ENCODE measurements at regions of chr19 and their contacts with region 1.

Region 1: DNA sequence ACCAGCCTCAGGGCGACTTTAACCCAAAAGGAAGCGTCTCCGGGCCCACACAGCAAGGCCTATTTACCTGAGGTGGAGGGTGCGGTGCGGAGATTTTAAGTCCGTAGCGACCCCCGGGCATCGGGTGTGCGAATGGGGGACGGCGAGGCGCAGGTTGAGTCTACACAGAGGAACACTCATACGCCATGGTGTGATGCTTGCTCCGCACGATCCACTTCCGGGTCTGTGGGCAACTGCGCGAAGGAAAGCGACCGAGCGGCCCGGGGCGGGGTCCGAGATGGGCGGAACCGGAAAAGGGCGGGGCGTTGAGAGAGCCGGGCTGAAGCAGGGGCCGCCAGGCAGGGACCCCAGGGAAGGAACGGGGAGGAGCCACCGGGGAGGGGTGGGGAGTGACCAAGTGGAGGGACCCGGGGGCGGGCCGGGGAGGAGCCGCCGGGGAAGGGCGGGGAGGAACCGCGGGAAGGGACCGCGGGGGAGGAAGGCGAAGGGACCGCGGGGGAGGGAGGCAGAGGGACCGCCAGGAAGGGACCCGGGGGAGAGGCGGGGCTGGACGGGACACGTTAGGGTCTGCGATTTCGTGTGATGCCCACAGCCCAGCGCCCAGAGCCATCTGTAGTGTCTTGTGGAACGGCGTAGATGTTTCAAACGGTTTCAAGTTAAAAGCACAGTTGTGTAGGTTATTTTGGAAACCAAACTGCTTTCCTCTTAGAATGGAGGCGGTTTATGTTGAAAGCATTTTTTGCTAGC is at the start of gene ZNF160:
- DNase-seq: peak; percentile 100
- ATAC-seq: peak; percentile 97
- H3K4me3 Mint-ChIP-seq: peak within 1 kb of the TSS; percentile 87
- H3K27ac Mint-ChIP-seq: peak within 1 kb of the TSS; percentile 93
- H3K4me1 Mint-ChIP-seq: peaks cover 32% of the 10 kb centered on the region
- H3K27me3 Mint-ChIP-seq: no peaks in the 10 kb centered on the region
- CTCF ChIP-seq: no peak
- total RNA-seq, gene ZNF160: 46.3 and 61.3 TPM in 2 replicates

Region 2: GRCh38 chr19:52535771-52536447 is 567.5 kb before region 1 on chr19:
- CTCF ChIA-PET with region 1: no interaction called
- POLR2A ChIA-PET with region 1: no interaction called
- intact Hi-C with region 1: loop called (anchors 5 kb)
- DNase-seq: peak; percentile 86
- ATAC-seq: peak; percentile 98
- H3K4me3 Mint-ChIP-seq: peak overlapping the region; percentile 92
- H3K27ac Mint-ChIP-seq: peak overlapping the region; percentile 86
- H3K4me1 Mint-ChIP-seq: peaks cover 23% of the 10 kb centered on the region
- H3K27me3 Mint-ChIP-seq: no peaks in the 10 kb centered on the region
- CTCF ChIP-seq: no peak

Region 3: DNA sequence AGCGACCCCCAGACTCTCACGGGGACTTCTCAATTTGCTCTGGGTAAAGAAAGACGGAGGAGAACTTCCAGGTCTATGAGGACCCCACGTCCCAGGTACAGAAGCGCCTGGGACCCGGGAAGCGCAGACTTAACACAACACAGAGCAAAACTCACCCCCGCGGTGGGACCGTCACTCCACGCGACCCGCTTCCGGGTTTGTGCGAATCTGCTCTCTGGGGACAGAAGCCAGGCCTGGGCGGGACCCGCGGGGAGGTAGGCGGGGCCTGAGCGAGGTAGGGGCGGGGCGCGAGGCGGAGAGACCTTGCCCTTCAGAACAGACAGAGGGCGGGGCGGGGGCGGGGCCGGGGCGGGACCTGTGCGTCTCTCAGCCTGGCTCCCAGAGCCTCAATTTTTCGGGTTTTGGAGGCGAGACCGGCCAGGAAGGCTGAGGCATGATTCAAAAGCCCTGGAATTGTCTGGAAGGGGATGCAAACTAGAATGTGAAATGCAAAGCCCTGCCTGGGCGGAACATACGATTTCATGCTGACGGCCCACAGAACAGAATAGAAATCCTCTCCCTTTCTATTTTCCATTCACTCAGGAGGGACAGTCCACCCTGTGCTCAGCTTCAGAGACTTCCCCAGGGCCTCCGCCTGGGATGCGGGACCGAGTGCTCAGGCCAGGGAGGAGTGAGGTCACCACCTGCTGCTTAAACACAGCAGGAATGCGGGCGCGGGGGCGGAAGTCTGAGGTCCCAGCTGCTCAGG is 160.8 kb before region 1 on chr19:
- CTCF ChIA-PET with region 1: no interaction called
- POLR2A ChIA-PET with region 1: no interaction called
- intact Hi-C with region 1: loop called (anchors 5 kb)
- DNase-seq: peak; percentile 98
- ATAC-seq: peak; percentile 99
- H3K4me3 Mint-ChIP-seq: peak overlapping the region; percentile 96
- H3K27ac Mint-ChIP-seq: peak overlapping the region; percentile 92
- H3K4me1 Mint-ChIP-seq: peaks cover 31% of the 10 kb centered on the region
- H3K27me3 Mint-ChIP-seq: no peaks in the 10 kb centered on the region
- CTCF ChIP-seq: no peak

Region 4: DNA sequence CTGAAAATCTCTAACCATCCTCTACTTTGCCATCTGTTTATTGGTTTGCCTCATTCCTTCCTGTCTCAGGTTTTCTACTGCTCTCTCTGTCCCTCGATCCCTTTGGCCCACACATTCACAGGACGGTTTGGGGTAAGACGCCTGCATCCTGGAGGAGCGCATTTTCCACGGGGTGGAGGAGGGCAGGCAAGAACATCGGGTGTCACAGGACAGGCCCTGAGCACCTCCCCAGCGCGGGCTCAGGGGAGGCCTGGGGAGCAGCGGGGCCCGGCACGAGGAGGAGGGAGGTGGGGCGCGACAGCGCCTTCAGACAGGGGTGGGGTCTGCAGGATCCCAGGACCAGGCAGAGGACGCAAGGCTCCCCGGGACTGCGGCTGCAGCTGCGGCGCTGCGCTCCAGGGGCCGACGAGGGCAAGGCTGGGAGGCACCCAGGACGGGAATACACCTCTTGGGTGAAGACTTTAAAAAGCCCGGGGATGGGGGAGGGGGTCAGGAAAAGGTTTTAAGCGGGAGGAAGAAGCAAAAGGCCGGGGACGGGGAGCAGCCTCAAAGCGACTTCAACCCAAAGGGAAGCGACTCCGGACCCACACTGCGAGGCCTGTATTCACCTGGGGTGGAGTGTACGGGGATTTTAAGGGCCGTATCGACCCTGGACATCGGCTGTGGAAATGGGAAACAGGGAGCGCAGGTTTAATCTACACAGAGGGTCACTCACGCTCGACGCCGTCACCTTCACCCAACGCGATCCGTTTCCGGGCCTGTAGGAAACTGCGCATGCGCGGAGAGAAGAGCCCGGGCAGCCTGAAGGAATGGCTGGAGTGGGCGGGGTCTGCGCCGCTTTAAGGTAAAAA is 29.0 kb after region 1 on chr19 and contains the start of gene ZNF415:
- CTCF ChIA-PET with region 1: no interaction called
- POLR2A ChIA-PET with region 1: no interaction called
- intact Hi-C with region 1: loop called (anchors 1 kb)
- DNase-seq: peak; percentile 62
- ATAC-seq: peak; percentile 93
- H3K4me3 Mint-ChIP-seq: peak within 1 kb of the TSS; percentile 85
- H3K27ac Mint-ChIP-seq: peak within 1 kb of the TSS; percentile 70
- H3K4me1 Mint-ChIP-seq: peaks cover 16% of the 10 kb centered on the region
- H3K27me3 Mint-ChIP-seq: no peaks in the 10 kb centered on the region
- CTCF ChIP-seq: no peak
- total RNA-seq, gene ZNF415: 2.7 and 5.8 TPM in 2 replicates

Region 5: DNA sequence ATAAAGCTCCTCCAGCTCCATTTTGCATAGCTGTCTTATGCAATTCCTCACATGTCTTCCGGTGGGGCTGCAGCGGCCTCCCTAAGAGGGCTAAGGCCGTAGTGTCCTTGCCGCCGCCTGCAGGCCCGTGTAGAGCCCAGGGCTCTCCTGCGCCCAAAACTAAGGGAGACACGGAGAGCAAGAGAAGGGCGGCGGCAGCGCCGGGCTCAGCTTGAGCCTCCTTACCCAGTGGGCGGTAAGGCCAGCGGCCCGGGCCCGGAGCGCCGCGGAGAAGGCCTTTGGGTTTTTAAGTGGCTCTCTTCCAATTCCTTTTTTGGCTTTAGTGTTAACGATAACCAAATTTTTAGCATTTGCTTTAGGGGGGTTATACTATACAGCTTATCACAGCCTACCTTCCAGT is 121.2 kb after region 1 on chr19:
- CTCF ChIA-PET with region 1: no interaction called
- POLR2A ChIA-PET with region 1: no interaction called
- intact Hi-C with region 1: no loop called
- DNase-seq: no peak
- ATAC-seq: no peak
- H3K4me3 Mint-ChIP-seq: no peak overlapping the region
- H3K27ac Mint-ChIP-seq: no peak overlapping the region
- H3K4me1 Mint-ChIP-seq: no peaks in the 10 kb centered on the region
- H3K27me3 Mint-ChIP-seq: no peaks in the 10 kb centered on the region
- CTCF ChIP-seq: no peak

Region 6: DNA sequence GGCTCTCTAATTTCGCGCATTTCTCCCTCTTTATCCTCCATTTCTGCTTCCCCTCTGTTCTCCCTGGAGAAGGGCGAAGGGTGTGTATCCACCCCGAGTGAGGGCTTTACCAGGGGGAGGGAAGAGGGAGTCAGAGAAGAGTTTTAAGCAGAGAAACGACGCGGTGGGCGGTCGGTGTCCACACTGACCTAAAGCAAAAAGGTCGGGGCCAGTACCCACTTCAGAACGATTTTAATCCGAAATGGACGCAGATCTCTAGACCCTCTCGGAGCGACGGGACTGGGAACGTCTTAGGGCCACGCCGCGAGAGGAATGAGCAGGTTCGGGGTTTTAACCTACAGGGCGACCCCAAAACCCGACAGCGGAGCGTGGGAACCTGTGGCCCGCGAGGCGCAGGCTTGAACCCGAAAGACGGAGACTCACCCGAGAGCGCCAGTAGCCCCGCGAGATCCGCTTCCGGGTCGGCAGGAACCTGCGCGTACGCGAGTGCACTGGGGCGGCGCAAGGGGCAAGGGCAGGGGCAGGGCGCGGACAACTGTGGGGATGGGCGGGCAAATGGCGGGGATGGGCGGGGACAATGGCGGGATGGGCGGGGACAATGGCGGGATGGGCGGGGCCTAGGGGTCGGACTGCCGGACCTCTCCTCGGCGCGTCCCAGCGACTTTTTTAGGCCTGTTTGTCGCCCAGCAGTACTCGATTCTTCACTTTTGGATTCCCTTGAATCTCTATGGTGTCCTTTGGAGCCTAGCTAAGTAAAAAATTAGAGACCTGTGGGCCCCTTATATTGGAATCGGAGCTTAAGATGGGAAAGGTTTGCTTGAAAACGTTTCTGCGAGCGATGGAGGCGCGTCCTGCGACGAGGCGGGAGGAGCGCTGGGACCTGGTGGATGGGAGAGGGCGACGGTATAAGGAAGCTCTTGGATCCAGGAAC is 151.3 kb after region 1 on chr19 and contains the start of gene ZNF677:
- CTCF ChIA-PET with region 1: no interaction called
- POLR2A ChIA-PET with region 1: no interaction called
- intact Hi-C with region 1: loop called (anchors 10 kb)
- DNase-seq: peak; percentile 57
- ATAC-seq: peak; percentile 99
- H3K4me3 Mint-ChIP-seq: peak within 1 kb of the TSS; percentile 87
- H3K27ac Mint-ChIP-seq: peak within 1 kb of the TSS; percentile 77
- H3K4me1 Mint-ChIP-seq: peaks cover 12% of the 10 kb centered on the region
- H3K27me3 Mint-ChIP-seq: no peaks in the 10 kb centered on the region
- CTCF ChIP-seq: no peak
- total RNA-seq, gene ZNF677: 13.7 and 14.2 TPM in 2 replicates

Region 7: DNA sequence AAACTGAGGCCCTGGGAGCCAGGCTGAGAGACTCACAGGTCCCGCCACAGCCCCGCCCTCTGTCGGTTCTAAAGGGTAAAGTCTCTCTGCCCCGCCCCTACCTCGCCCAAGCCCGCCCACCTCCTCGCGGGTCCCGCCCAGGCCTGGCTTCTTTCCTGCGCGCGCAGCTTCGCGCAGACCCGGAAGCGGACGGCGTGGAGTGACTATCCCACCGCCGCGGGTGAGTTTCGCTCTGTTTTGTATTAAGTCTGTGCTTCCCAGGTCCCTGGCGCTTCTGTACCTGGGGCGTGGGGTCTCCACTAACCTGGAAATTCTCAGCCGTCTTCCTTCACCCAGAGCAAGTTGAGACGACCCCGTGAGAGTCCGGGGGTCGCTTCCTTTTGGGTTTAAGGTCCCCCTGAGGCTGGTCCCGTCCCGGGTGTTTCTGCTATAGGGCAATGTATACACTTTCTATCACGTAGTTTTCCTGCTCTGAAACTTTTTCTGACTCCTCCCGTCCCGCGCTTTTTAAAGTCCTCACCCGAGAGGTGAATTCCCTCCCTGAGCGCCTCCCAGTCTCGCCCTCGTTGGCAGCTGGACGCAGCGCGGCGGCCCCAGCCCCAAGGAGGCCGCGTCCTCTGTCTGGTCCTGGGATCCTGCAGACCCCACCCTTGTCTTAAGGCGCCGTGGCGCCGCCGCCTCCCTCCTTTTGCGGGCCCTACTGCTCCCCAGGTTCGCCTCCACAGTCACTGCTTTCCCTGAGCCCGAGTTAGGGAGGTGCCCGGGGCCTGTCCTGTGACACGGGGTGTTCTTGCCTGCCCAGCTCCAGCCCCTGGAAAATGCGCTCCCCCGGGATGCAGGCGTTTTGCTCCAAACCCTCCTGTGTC is 291.8 kb after region 1 on chr19 and contains the start of gene ZNF765:
- CTCF ChIA-PET with region 1: no interaction called
- POLR2A ChIA-PET with region 1: no interaction called
- intact Hi-C with region 1: loop called (anchors 1 kb)
- DNase-seq: peak; percentile 98
- ATAC-seq: peak; percentile 99
- H3K4me3 Mint-ChIP-seq: peak within 1 kb of the TSS; percentile 95
- H3K27ac Mint-ChIP-seq: peak within 1 kb of the TSS; percentile 90
- H3K4me1 Mint-ChIP-seq: peaks cover 29% of the 10 kb centered on the region
- H3K27me3 Mint-ChIP-seq: no peaks in the 10 kb centered on the region
- CTCF ChIP-seq: no peak
- total RNA-seq, gene ZNF765: 16.2 and 18.9 TPM in 2 replicates